ENCODE measurements at regions of chr18 and their contacts with region 1.

Region 1: GRCh38 chr18:22983175-22983574 is 50.0 kb downstream of the RBBP8 start:
- DNase-seq: no peak
- ATAC-seq: no peak
- H3K4me3 ChIP-seq: no peak overlapping the region
- H3K27ac ChIP-seq: no peak overlapping the region
- H3K4me1 ChIP-seq: peaks cover 0 to 8% (median 0%) of the 10 kb centered on the region in 9 donors
- H3K27me3 ChIP-seq: no peaks in the 10 kb centered on the region
- CTCF ChIP-seq: peak in 8 of 9 donors; percentile 13 to 71 (median 62)

Region 2: DNA sequence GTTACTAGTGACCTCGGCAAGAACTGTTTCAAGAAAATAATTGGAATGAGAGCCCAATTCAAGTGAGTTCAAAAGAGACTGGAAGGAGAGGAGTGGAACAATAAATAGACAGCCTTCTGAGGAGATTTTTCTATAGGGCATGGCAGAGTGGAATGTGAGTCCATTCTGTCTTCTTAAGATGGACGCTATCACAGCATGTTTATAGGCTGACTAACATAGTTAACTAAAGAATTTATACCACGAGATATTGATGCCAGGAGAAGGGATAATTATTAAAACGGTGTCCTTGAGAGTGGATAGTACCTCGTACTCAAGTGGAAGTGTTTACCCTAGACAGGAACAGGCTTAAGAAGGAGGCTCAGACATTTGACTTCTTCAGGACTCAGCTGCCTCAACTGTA is 193.6 kb before region 1 on chr18:
- intact Hi-C with region 1: loop called in 1 of 10 experiments (anchors 10 kb)
- DNase-seq: no peak
- ATAC-seq: no peak
- H3K4me3 ChIP-seq: no peak overlapping the region
- H3K27ac ChIP-seq: no peak overlapping the region
- H3K4me1 ChIP-seq: no peaks in the 10 kb centered on the region
- H3K27me3 ChIP-seq: no peaks in the 10 kb centered on the region
- CTCF ChIP-seq: no peak

Region 3: GRCh38 chr18:22800551-22800951 is 182.6 kb before region 1 on chr18:
- intact Hi-C with region 1: loop called in 7 of 10 experiments (anchors 5 to 10 kb)
- DNase-seq: no peak
- ATAC-seq: peak in 5 of 8 donors; percentile 28 to 69 (median 52)
- H3K4me3 ChIP-seq: no peak overlapping the region
- H3K27ac ChIP-seq: peak overlapping the region in 3 of 10 donors; percentile 20 to 31 (median 25)
- H3K4me1 ChIP-seq: peaks cover 0 to 24% (median 0%) of the 10 kb centered on the region in 9 donors
- H3K27me3 ChIP-seq: no peaks in the 10 kb centered on the region
- CTCF ChIP-seq: no peak

Region 4: DNA sequence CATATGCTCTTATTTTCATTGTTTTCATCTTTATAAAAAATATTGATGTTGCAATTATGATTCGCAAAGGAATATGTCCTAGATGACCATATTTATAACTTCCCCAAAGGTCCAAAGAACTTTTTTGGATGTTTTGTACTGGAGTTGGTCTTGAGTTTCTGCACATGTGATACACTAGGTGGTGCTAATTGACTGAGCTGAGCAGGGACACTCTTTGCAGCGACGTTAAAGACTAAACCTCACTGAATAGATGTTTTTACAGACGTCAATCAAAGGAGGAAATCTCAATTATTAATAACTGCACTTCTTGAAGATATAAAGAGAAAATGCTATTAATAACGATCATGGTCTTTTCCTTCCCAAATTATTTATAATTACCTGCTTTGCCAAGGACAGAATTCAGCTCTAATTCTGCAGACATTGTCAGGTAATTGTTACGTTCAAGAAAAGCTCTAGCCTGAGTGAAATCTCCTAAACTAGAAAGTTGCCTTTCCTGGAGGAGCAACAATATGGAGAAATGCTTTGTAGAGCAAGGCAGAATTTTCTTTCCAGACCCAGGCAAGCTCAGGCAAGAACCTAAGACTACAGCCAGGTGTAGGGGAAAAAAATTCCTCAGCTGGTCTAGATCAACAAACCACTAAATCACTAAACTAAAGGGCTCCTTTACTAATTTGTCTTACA is 169.4 kb before region 1 on chr18:
- intact Hi-C with region 1: loop called in 5 of 10 experiments (anchors 1 to 10 kb)
- DNase-seq: no peak
- ATAC-seq: no peak
- H3K4me3 ChIP-seq: no peak overlapping the region
- H3K27ac ChIP-seq: no peak overlapping the region
- H3K4me1 ChIP-seq: no peaks in the 10 kb centered on the region
- H3K27me3 ChIP-seq: peaks cover 0 to 14% (median 7%) of the 10 kb centered on the region in 7 donors
- CTCF ChIP-seq: peak in 8 of 9 donors; percentile 23 to 74 (median 58)

Region 5: DNA sequence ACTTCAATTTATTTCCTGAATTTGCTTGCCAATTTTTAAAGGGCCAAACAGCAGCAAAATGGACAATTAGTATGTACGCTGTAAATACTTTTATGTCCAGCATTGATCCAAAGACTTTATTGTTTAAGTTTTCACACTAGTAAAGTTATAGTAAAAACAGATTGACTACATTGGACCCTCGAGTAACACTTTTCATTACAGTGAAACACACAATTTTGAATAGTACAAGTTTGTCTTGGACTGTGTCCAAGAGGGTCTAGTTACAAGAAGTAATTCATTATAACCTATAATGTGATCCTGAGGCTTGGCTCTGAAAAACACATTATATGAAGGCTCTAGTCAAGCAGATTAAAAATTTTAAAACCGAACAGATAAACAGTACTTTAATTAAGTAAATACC is 61.4 kb before region 1 on chr18:
- intact Hi-C with region 1: loop called in 1 of 10 experiments (anchors 10 kb)
- DNase-seq: no peak
- ATAC-seq: no peak
- H3K4me3 ChIP-seq: no peak overlapping the region
- H3K27ac ChIP-seq: no peak overlapping the region
- H3K4me1 ChIP-seq: no peaks in the 10 kb centered on the region
- H3K27me3 ChIP-seq: no peaks in the 10 kb centered on the region
- CTCF ChIP-seq: no peak

Region 6: DNA sequence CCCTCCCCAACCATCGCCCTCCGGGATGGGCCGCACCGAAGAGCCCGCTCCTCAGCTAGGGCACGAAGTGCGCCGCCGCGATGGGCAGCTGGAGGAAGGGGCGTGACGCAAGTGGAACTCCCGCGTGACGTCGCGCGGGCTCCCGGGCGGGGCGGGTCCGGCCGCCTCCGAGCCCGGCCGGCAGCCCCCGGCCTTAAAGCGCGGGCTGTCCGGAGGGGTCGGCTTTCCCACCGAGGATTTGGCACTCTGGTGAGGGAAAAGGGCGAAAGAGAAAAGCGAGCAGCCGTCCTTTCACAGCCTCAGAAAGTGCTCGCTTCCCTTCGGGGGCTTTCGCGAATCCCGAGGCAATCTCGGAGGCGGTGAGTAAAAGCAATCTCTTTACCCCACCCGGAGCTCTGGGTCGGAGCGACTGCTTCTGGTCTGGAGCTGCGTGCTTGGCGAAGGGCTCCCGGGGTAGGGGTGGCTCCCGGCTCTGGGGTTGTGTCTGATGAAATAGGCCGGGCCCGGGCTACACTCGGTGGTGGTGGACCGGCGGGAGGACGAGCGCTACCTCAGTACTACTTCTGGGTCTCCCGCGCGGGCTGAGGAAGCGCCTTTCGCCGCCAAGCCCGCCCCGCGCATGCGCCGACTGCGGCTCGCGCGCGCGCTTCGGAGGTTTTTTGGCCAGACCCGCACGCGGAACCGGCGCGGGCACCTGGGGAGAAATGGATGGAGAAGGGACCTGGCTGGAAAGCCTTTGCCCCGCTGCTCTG is 49.8 kb before region 1 on chr18 and contains the start of gene RBBP8:
- intact Hi-C with region 1: loop called in 9 of 10 experiments (anchors 2 to 10 kb)
- DNase-seq: peak; percentile 85 to 89
- ATAC-seq: peak; percentile 97 to 98 (median 98)
- H3K4me3 ChIP-seq: peak within 1 kb of the TSS; percentile 71 to 98 (median 86)
- H3K27ac ChIP-seq: peak within 1 kb of the TSS; percentile 87 to 99 (median 96)
- H3K4me1 ChIP-seq: peaks cover 0 to 27% (median 11%) of the 10 kb centered on the region in 9 donors
- H3K27me3 ChIP-seq: no peaks in the 10 kb centered on the region
- CTCF ChIP-seq: no peak
- total RNA-seq, gene RBBP8: 4.0 to 13.5 (median 7.1) TPM

Region 7: DNA sequence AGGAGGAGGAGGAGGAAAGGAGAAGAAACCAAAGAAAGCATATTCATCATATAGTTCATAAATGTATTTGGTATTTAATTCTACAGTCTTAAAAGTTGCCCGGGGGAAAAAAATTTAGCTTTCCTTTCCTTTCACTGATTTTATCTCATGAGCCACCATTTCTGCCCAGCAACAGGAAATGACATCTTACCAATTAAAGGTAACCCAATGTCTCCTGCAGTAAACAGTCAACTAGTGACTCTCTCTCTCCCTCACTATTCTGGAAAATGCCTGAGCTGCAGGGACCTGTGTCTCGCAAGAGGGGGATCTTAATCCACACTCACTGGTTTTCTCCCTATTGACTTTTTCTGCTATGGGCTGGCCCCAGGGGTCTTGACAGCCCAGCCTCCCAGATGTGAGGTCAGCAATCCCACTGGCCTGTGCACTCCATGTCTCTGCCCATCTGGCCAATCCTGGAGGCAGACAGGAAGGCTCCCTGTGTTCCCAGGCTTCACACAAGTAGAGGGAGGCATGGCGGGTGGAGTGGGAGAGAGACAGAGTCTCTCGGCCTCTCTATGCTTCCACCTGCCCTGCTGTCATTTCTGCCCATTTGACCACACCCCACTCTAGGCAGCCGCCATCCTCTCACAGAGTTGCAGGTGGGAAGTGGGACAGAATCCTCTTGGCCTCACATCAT is 66.7 kb after region 1 on chr18:
- intact Hi-C with region 1: loop called in 1 of 10 experiments (anchors 10 kb)
- DNase-seq: no peak
- ATAC-seq: no peak
- H3K4me3 ChIP-seq: no peak overlapping the region
- H3K27ac ChIP-seq: no peak overlapping the region
- H3K4me1 ChIP-seq: peaks cover 0 to 16% (median 0%) of the 10 kb centered on the region in 9 donors
- H3K27me3 ChIP-seq: peaks cover 0 to 19% (median under 1%) of the 10 kb centered on the region in 7 donors
- CTCF ChIP-seq: no peak

Region 8: GRCh38 chr18:23291456-23292205 is 308.5 kb after region 1 on chr18:
- intact Hi-C with region 1: no loop called
- DNase-seq: no peak
- ATAC-seq: peak in 3 of 8 donors; percentile 9 to 33 (median 25)
- H3K4me3 ChIP-seq: no peak overlapping the region
- H3K27ac ChIP-seq: no peak overlapping the region
- H3K4me1 ChIP-seq: peaks cover 0 to 5% (median 0%) of the 10 kb centered on the region in 9 donors
- H3K27me3 ChIP-seq: no peaks in the 10 kb centered on the region
- CTCF ChIP-seq: no peak

Measured in heart right ventricle (tissue), 16 donors.